ENCODE measurements at regions of chr5 and their contacts with region 1.

Region 1: DNA sequence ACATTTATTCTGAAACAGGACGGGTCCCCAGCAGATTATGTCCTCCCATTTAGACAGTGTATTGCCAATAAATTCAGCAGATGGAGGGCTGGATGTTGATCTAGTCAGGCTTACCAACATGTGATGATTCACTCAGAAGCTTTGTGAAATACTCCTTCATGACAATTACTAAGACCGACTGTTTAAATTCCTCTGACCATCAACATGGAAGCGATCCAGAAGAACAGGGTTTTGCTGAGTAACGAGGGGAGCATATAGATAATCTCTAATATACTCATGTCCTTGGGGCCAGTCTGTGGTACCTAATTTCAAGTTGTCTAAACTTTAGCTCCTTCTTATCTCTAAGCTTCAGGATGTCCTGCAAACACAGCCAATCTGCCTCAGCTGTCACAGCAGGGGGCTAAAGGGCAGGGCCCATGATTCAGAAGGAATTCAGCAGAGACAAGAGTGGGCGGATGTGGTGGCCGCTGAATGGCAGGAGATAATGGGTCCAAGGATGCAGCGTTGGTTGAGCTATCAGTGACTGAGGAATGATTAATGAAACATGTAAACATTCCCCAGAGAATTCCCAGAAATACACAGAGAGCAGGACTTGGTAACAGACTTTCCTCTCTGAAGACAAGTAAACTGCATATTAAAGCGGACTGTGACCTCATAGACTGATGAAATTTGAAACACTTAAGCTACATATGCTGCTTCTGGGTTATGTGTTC is 109.4 kb downstream of the ANKRD55 start:
- DNase-seq: peak; percentile 94
- H3K4me3 ChIP-seq: no peak overlapping the region
- CTCF ChIP-seq: no peak

Region 2: GRCh38 chr5:55582256-55582655 is 541.4 kb before region 1 on chr5:
- in situ Hi-C with region 1: no loop called
- DNase-seq: no peak
- H3K4me3 ChIP-seq: no peak overlapping the region
- CTCF ChIP-seq: no peak

Region 3: GRCh38 chr5:56190497-56190896 is 66.8 kb after region 1 on chr5:
- in situ Hi-C with region 1: loop called (anchors 5 kb)
- DNase-seq: no peak
- H3K4me3 ChIP-seq: no peak overlapping the region
- CTCF ChIP-seq: no peak

Measured in astrocyte of the cerebellum (primary cell).